SK-N-SH (cell line): ENCODE measurements at regions of chr7 and their contacts with region 1.

Region 1: GRCh38 chr7:28926871-28927597 is 31.1 kb downstream of the TRIL start:
- DNase-seq: peak; percentile 72
- H3K4me3 ChIP-seq: peak overlapping the region; percentile 55 to 65
- H3K27ac ChIP-seq: peak overlapping the region in 1 of 2 experiments; percentile 45; a peak in 1 of 4 replicates
- H3K4me1 ChIP-seq: peaks cover 0 to 22% of the 10 kb centered on the region in 2 experiments; a peak in 3 of 4 replicates
- H3K27me3 ChIP-seq: 0 out of 2 replicates have a peak, but pooled peaks cover 15% of the 10 kb centered on the region
- CTCF ChIP-seq: peak; percentile 99
- EP300 ChIP-seq: peak in 1 of 2 experiments; percentile 42; a peak in 1 of 4 replicates
- RAD21 ChIP-seq: peak; percentile 99

Region 2: DNA sequence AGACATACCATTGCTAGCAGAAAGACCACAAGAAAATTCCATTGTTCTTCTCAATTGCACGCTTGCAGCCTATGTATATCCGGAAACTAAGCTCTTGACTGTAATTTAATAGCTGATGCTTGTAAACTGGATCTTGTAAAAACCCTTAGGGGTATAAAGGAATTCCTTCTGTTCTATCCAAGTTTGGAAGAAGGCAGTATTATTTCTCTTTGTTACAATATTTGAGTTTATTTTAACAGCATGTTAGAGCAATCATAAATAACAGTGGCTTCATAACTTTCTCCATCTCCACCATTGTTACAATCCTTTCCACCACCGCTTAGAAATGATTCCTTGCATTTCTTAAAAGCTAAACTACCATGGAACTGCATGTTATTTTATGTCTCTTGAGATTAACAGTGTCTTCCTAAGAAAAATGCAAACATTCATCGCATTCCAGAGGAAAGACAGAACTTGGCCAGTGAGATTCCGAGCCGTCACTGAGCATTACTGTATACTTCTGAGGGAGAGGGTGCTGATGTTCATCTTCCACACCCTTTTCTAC is 61.4 kb before region 1 on chr7:
- CTCF ChIA-PET with region 1: interaction called, 12 read pairs
- POLR2A ChIA-PET with region 1: no interaction called
- DNase-seq: no peak
- H3K4me3 ChIP-seq: no peak overlapping the region
- H3K27ac ChIP-seq: no peak overlapping the region
- H3K4me1 ChIP-seq: no peaks in the 10 kb centered on the region
- H3K27me3 ChIP-seq: peaks cover 14% of the 10 kb centered on the region; the same call in 1 of the 2 replicates
- CTCF ChIP-seq: no peak
- EP300 ChIP-seq: no peak
- RAD21 ChIP-seq: no peak

Region 3: GRCh38 chr7:28990200-28990960 is 63.3 kb after region 1 on chr7:
- CTCF ChIA-PET with region 1: interaction called, 66 read pairs
- POLR2A ChIA-PET with region 1: no interaction called
- DNase-seq: peak; percentile 22
- H3K4me3 ChIP-seq: no peak overlapping the region
- H3K27ac ChIP-seq: peak overlapping the region in 1 of 2 experiments; percentile 51; a peak in 1 of 4 replicates
- H3K4me1 ChIP-seq: peaks cover 6 to 38% of the 10 kb centered on the region in 2 experiments; a peak in 2 of 4 replicates
- H3K27me3 ChIP-seq: no peaks in the 10 kb centered on the region
- CTCF ChIP-seq: no peak
- EP300 ChIP-seq: no peak
- RAD21 ChIP-seq: no peak

Region 4: GRCh38 chr7:29078311-29079260 is 151.6 kb after region 1 on chr7:
- CTCF ChIA-PET with region 1: interaction called, 23 read pairs
- POLR2A ChIA-PET with region 1: no interaction called
- DNase-seq: no peak
- H3K4me3 ChIP-seq: no peak overlapping the region
- H3K27ac ChIP-seq: peak overlapping the region in 1 of 2 experiments; percentile 36; a peak in 1 of 4 replicates
- H3K4me1 ChIP-seq: peaks cover 0 to 10% of the 10 kb centered on the region in 2 experiments; a peak in 2 of 4 replicates
- H3K27me3 ChIP-seq: no peaks in the 10 kb centered on the region
- CTCF ChIP-seq: no peak
- EP300 ChIP-seq: no peak
- RAD21 ChIP-seq: no peak

Region 5: GRCh38 chr7:29156907-29157452 is 229.9 kb after region 1 on chr7:
- CTCF ChIA-PET with region 1: interaction called, 36 read pairs
- POLR2A ChIA-PET with region 1: no interaction called
- DNase-seq: peak; percentile 39
- H3K4me3 ChIP-seq: no peak overlapping the region
- H3K27ac ChIP-seq: no peak overlapping the region
- H3K4me1 ChIP-seq: peaks cover 0 to 26% of the 10 kb centered on the region in 2 experiments; a peak in 2 of 4 replicates
- H3K27me3 ChIP-seq: no peaks in the 10 kb centered on the region
- CTCF ChIP-seq: no peak
- EP300 ChIP-seq: no peak
- RAD21 ChIP-seq: no peak

Region 6: DNA sequence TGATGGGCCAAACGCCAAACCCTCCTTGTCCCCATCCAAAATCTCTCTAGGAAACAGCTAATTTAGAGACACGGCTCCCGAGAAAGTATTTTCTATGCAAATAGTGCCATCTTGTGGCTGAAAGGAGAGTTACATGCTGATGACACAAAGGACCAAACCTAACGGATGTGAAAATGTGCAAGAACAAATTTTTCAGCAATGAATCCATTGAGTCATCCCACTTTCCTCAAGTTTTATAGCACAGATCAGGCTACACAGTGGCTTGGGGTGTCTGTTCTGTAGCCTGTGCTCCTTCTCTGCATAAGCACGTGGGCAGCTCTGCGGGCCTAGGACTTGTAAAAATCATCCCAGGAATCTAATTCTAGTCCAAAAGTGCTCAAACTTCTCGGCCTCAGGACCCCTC is 481.8 kb after region 1 on chr7:
- CTCF ChIA-PET with region 1: interaction called, 372 read pairs
- POLR2A ChIA-PET with region 1: interaction called, 4 read pairs
- DNase-seq: peak; percentile 76
- H3K4me3 ChIP-seq: no peak overlapping the region
- H3K27ac ChIP-seq: no peak overlapping the region
- H3K4me1 ChIP-seq: no peaks in the 10 kb centered on the region; a peak in 1 of 4 replicates
- H3K27me3 ChIP-seq: 0 out of 2 replicates have a peak, but pooled peaks cover 4% of the 10 kb centered on the region
- CTCF ChIP-seq: peak; percentile 97
- EP300 ChIP-seq: no peak
- RAD21 ChIP-seq: peak; percentile 99

Region 7: GRCh38 chr7:30322271-30323005 is 1395.4 kb after region 1 on chr7:
- CTCF ChIA-PET with region 1: no interaction called
- POLR2A ChIA-PET with region 1: no interaction called
- DNase-seq: no peak
- H3K4me3 ChIP-seq: no peak overlapping the region
- H3K27ac ChIP-seq: peak overlapping the region in 1 of 2 experiments; percentile 4; a peak in 1 of 4 replicates
- H3K4me1 ChIP-seq: peaks cover 10 to 19% of the 10 kb centered on the region in 2 experiments; a peak in 3 of 4 replicates
- H3K27me3 ChIP-seq: no peaks in the 10 kb centered on the region
- CTCF ChIP-seq: no peak
- EP300 ChIP-seq: no peak
- RAD21 ChIP-seq: no peak